Activated CD4-positive, alpha-beta T cell treated with anti-CD3 and anti-CD28 coated beads, Interleukin-2, amount 10 ng/mL, durations not matched to agents 24 days and 14 days (primary cell): ENCODE measurements at regions of chr10 and their contacts with region 1.

Region 1: DNA sequence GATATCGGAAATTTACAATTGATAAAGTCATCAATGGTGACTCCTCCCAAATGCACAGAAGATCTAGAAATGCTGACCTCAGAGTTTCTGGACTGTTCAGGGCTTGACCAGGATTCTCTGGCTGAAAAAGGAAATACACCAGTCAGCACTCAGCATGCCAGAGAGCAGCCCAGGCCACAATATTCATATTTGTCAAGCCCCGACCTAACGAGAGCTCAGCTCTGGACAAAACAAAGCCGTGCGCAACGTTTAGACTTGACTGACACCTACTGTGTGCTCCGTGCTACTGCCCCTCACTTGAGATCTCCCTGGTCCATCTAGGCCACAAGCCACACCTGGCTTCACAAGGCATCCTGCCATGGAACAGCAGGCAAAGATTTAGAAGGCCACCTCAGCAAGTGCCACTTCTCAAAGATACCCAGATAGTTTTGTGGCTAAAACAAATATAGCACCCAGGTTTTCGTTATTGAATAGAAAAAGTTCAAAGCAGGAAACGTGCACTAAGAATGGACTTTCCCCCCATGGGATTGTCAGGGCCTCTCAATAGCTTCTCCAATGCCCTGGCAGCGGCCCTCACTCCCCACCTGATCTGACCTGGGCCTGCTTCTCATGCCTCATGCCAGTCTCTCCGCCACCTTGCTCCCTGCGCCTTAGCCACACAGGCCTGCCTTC is 218.3 kb downstream of the FAM107B start:
- DNase-seq: no peak
- H3K4me3 Mint-ChIP-seq: no peak overlapping the region
- H3K27ac Mint-ChIP-seq: peak overlapping the region; percentile 54
- H3K4me1 Mint-ChIP-seq: peaks cover 77% of the 10 kb centered on the region
- H3K27me3 Mint-ChIP-seq: no peaks in the 10 kb centered on the region

Region 2: GRCh38 chr10:14528450-14528849 is 28.0 kb before region 1 on chr10:
- intact Hi-C with region 1: loop called (anchors 5 kb)
- DNase-seq: peak; percentile 79
- H3K4me3 Mint-ChIP-seq: peak overlapping the region; percentile 69
- H3K27ac Mint-ChIP-seq: peak overlapping the region; percentile 70
- H3K4me1 Mint-ChIP-seq: peaks cover 75% of the 10 kb centered on the region
- H3K27me3 Mint-ChIP-seq: no peaks in the 10 kb centered on the region

Region 3: GRCh38 chr10:14543046-14543903 is 13.1 kb before region 1 on chr10:
- intact Hi-C with region 1: loop called (anchors 1 kb)
- DNase-seq: peak; percentile 78
- H3K4me3 Mint-ChIP-seq: peak overlapping the region; percentile 77
- H3K27ac Mint-ChIP-seq: peak overlapping the region; percentile 90
- H3K4me1 Mint-ChIP-seq: peaks cover 65% of the 10 kb centered on the region
- H3K27me3 Mint-ChIP-seq: no peaks in the 10 kb centered on the region

Region 4: DNA sequence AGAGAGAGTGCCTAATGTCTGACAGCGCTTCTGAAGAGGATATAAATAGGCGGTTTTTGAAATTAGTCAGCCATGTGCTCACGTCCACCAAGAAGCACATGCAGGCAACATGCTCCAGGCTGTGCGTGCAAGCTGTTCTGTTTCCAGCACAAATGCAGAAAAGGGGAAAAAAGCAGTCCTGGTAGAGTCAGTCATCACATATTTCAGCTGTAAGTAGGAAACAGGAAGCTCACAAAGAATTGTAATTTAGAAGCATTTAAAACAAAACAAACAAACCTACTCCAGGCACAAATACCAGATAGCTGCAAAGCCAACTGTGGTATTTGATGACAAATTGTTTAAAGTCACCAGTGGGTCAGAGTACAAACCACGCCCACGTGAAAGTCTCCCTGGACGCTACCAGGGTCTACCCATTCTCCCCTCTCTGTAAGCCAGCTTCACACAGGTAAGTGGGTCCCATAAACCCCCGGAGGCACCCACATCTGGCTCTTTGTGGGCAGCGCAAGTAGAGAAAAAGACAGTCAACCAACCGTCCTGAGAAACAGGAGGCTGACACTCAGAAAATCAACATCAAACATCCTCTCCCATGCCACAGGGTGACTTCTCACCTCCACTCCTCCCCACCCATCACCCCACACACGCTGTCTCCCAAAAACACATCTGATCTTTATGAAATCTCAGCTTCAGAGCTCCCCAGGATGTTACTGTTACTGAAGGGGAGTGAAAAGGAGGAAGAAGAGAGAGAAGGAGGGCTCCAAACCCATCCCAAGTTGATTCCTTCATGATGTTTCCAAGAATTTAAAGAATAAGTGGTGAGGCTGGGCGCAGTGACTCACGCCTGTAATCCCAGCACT is 31.9 kb after region 1 on chr10:
- intact Hi-C with region 1: loop called (anchors 1 kb)
- DNase-seq: peak; percentile 87
- H3K4me3 Mint-ChIP-seq: peak overlapping the region; percentile 84
- H3K27ac Mint-ChIP-seq: peak overlapping the region; percentile 97
- H3K4me1 Mint-ChIP-seq: peaks cover 75% of the 10 kb centered on the region
- H3K27me3 Mint-ChIP-seq: no peaks in the 10 kb centered on the region

Region 5: GRCh38 chr10:14837757-14838581 is 281.5 kb after region 1 on chr10 and contains the starts of genes CDNF, HSPA14 and MSANTD7:
- intact Hi-C with region 1: loop called (anchors 5 kb)
- DNase-seq: peak; percentile 100
- H3K4me3 Mint-ChIP-seq: peak within 1 kb of the TSS; percentile 92
- H3K27ac Mint-ChIP-seq: peak within 1 kb of the TSS; percentile 96
- H3K4me1 Mint-ChIP-seq: peaks cover 18% of the 10 kb centered on the region
- H3K27me3 Mint-ChIP-seq: no peaks in the 10 kb centered on the region
- total RNA-seq, gene CDNF: 0.62 and 0.70 TPM in 2 replicates
- total RNA-seq, gene HSPA14: 42.0 and 44.1 TPM in 2 replicates
- total RNA-seq, gene MSANTD7: 28.9 and 30.3 TPM in 2 replicates

Region 6: DNA sequence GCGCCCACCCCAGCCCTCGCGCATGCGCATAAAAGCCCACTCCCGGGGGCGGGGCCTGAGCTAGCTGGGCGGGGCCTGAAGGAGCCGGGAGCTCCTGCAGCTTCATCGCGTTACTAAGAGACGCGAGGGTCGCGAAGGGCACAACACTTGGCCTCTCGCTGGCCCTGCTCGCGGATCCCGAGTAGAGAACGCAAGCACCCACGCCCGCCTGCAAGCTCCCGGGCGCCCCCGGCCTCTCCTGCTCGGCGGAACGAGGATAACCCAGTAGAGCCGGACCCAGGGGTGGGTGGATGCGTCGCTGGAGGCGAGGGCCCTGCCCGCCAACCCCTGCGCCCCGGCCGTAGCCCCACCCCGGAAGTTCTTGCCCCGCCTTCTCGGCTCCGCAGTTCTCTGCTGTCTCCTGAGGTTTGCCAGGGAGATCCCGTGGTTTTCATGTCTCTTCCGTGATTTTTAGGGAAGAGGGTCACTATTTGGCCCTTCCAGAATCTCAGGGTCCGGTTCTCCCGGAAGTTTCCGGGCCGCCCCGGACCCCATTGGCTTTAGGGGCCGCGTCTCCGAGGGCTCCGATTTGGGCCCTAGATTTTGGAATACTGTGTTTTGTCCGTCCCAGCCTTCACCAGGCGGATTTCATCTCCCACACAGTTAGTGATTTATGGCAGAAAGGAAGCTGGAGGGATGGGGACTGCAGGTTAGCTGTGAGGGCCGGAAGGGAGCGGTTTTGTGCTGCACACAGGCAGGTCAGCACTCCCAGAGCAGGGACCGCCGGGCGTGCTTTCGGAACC is 403.0 kb after region 1 on chr10 and contains the start of gene MEIG1:
- intact Hi-C with region 1: loop called (anchors 10 kb)
- DNase-seq: peak; percentile 98
- H3K4me3 Mint-ChIP-seq: peak within 1 kb of the TSS; percentile 93
- H3K27ac Mint-ChIP-seq: peak within 1 kb of the TSS; percentile 96
- H3K4me1 Mint-ChIP-seq: peaks cover 17% of the 10 kb centered on the region
- H3K27me3 Mint-ChIP-seq: no peaks in the 10 kb centered on the region
- total RNA-seq, gene MEIG1: not detected in 2 replicates